ENCODE measurements at regions of chr19 and their contacts with region 1.

Region 1: GRCh38 chr19:46661020-46661731 is at the start of gene DACT3:
- DNase-seq: peak; percentile 100
- H3K4me3 ChIP-seq: peak within 1 kb of the TSS; percentile 47 to 71 (median 54)
- H3K27ac ChIP-seq: no peak within 1 kb of the TSS
- H3K4me1 ChIP-seq: peaks cover 0 to 14% (median 9%) of the 10 kb centered on the region in 4 experiments; a peak in 6 of 7 replicates
- H3K27me3 ChIP-seq: peaks cover 0 to 17% (median 11%) of the 10 kb centered on the region in 4 experiments; a peak in 4 of 7 replicates
- CTCF ChIP-seq: no peak
- EP300 ChIP-seq: no peak
- POLR2A ChIP-seq: no peak
- RAD21 ChIP-seq: no peak
- total RNA-seq, gene DACT3: 1.5 and 2.0 TPM in 2 replicates

Region 2: DNA sequence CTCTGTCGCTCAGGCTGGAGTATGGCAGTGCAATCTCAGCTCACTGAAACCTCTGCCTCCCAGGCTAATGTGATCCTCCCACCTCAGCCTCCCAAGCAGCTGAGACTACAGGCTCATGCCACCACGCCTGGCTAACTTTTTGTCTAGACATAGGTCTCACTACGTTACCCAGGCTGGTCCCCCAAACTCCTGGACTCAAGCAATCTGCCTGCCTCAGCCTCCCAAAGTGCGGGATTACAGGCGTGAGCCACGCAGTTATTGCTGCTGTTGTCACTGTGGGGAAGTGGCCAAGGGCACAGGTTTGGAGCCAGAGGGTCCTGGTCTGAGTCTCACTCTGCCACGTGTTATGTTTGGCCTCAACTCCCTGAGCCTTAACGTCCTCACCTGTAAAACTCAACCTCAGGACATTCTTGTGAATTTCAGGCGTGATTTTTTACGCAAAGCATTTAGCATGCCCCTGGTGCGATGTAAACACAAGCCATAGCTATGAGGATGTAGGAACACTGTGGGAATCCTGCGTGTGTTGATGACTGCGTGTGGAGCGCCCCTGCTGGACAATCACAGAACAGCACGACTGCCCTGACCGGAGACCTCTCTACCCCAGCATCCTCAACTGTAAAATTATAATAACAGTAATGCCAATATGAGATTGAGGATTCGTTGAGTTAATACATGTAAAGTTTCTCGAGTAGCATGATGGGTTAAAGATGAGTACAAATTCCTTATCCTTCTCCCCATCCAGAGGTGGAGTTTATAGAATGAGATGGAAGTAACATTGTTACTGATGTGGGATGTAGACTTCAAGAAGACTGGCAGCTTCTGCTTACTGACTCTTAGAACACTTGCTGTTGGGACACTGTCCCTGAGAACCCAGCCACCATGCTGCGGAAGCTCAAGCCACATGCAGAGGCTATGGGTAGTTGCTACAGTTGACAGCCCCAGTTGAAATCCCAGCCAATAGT is 123.8 kb before region 1 on chr19:
- CTCF ChIA-PET with region 1: interaction called, 11 read pairs
- POLR2A ChIA-PET with region 1: interaction called, 3 read pairs
- DNase-seq: peak in 1 of 2 experiments; percentile 93
- H3K4me3 ChIP-seq: no peak overlapping the region; a peak in 1 of 8 replicates
- H3K27ac ChIP-seq: no peak overlapping the region
- H3K4me1 ChIP-seq: no peaks in the 10 kb centered on the region; a peak in 2 of 7 replicates
- H3K27me3 ChIP-seq: no peaks in the 10 kb centered on the region
- CTCF ChIP-seq: peak; percentile 71 to 97 (median 96)
- EP300 ChIP-seq: no peak
- POLR2A ChIP-seq: no peak
- RAD21 ChIP-seq: peak; percentile 2 to 43; a peak in 3 of 4 replicates

Region 3: GRCh38 chr19:46614114-46614722 is 47.0 kb before region 1 on chr19:
- CTCF ChIA-PET with region 1: interaction called, 341 read pairs
- POLR2A ChIA-PET with region 1: interaction called, 8 read pairs
- DNase-seq: peak; percentile 58 to 97
- H3K4me3 ChIP-seq: no peak overlapping the region
- H3K27ac ChIP-seq: no peak overlapping the region
- H3K4me1 ChIP-seq: no peaks in the 10 kb centered on the region
- H3K27me3 ChIP-seq: no peaks in the 10 kb centered on the region
- CTCF ChIP-seq: peak; percentile 85 to 91 (median 91)
- EP300 ChIP-seq: no peak
- POLR2A ChIP-seq: no peak
- RAD21 ChIP-seq: peak; percentile 75 to 88

Region 4: DNA sequence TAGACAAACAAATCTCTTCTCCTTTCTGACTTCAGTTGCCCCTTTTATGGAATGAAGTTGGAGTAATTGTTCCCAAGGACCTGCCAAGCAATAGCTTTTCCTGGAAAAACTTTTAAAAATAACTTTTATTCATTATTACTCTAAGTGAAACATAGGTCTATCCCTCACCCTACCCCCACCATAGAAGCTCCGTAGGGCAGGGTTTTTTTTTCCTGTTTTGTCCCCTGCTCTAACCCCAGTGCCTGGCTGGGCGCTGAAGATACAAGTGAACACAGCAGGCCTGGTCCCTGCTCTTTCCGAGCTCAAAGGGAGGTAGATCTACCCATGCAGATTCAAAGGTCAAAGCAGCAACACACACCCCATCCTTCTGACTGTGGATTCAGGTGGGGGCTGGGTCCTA is 16.5 kb before region 1 on chr19:
- CTCF ChIA-PET with region 1: interaction called, 17 read pairs
- POLR2A ChIA-PET with region 1: interaction called, 7 read pairs
- DNase-seq: no peak
- H3K4me3 ChIP-seq: no peak overlapping the region
- H3K27ac ChIP-seq: no peak overlapping the region
- H3K4me1 ChIP-seq: peaks cover 0 to 4% (median 1%) of the 10 kb centered on the region in 4 experiments; a peak in 4 of 7 replicates
- H3K27me3 ChIP-seq: peaks cover 25 to 44% (median 40%) of the 10 kb centered on the region in 4 experiments
- CTCF ChIP-seq: no peak
- EP300 ChIP-seq: no peak
- POLR2A ChIP-seq: no peak
- RAD21 ChIP-seq: no peak

Region 5: GRCh38 chr19:46687438-46688145 is 26.4 kb after region 1 on chr19:
- CTCF ChIA-PET with region 1: interaction called, 12 read pairs
- POLR2A ChIA-PET with region 1: no interaction called
- DNase-seq: no peak
- H3K4me3 ChIP-seq: no peak overlapping the region
- H3K27ac ChIP-seq: no peak overlapping the region
- H3K4me1 ChIP-seq: no peaks in the 10 kb centered on the region
- H3K27me3 ChIP-seq: no peaks in the 10 kb centered on the region
- CTCF ChIP-seq: no peak
- EP300 ChIP-seq: no peak
- POLR2A ChIP-seq: no peak
- RAD21 ChIP-seq: no peak

Measured in H1 (cell line).